MCF 10A (cell line): ENCODE measurements at regions of chr3 and their contacts with region 1.

Region 1: DNA sequence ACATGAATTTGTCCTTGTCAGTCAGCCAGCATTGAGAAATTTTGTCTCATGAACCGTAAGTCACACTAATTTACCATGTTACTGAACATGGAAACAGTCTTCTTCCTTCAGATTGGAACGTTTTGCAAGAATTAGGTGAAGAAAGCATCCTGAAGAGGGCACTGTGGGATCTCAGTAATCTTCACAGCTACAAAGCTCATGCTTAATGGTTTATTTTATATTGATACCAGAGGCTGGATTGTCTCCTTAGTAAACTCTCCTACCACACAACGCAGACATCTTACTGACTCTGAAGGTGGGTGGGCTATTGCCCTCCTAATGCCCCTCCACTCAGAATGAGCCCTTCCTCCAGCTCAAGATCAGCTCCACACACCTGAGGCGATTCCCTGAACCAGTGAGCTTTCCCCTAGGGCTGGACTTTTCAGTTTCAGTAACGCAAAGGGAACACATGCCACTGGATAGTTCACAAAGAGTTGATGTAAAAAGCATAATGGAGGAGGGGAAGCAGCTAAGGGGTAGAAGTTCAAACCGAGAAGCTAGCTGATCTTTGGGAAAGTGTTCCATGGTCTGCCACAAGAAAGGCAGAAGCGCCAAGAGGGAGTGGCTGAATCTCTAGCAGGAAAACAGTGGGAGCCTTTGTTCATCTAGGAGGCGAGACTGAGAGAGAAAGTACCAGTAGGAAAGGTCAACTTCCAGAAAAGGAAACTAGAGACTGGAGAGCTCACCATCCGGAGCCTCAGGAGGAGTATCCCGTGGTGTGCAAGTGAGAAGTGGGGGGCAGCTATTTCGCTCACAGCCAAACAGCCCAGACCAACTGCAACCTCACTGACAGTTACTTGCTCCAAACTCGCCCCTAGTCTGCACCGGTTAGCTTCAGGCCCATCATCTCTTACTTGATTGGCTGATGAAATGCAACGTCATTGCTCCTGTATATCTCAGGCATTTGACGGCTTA is at the start of gene SLC9C1:
- DNase-seq: peak; percentile 84
- H3K4me3 Mint-ChIP-seq: peak within 1 kb of the TSS; percentile 60
- H3K27ac Mint-ChIP-seq: peak within 1 kb of the TSS; percentile 88
- H3K4me1 Mint-ChIP-seq: peaks cover 16% of the 10 kb centered on the region
- H3K27me3 Mint-ChIP-seq: no peaks in the 10 kb centered on the region
- CTCF ChIP-seq: peak; percentile 56
- total RNA-seq, gene SLC9C1: not detected in 2 replicates

Region 2: GRCh38 chr3:112117841-112118571 is 175.6 kb before region 1 on chr3:
- CTCF ChIA-PET with region 1: interaction called, 10 read pairs
- POLR2A ChIA-PET with region 1: no interaction called
- intact Hi-C with region 1: no loop called
- DNase-seq: no peak
- H3K4me3 Mint-ChIP-seq: no peak overlapping the region
- H3K27ac Mint-ChIP-seq: peak overlapping the region; percentile 35
- H3K4me1 Mint-ChIP-seq: no peaks in the 10 kb centered on the region
- H3K27me3 Mint-ChIP-seq: no peaks in the 10 kb centered on the region
- CTCF ChIP-seq: no peak

Region 3: GRCh38 chr3:112273536-112273935 is 20.1 kb before region 1 on chr3:
- CTCF ChIA-PET with region 1: interaction called, 16 read pairs
- POLR2A ChIA-PET with region 1: no interaction called
- intact Hi-C with region 1: no loop called
- DNase-seq: no peak
- H3K4me3 Mint-ChIP-seq: no peak overlapping the region
- H3K27ac Mint-ChIP-seq: no peak overlapping the region
- H3K4me1 Mint-ChIP-seq: no peaks in the 10 kb centered on the region
- H3K27me3 Mint-ChIP-seq: no peaks in the 10 kb centered on the region
- CTCF ChIP-seq: no peak

Region 4: DNA sequence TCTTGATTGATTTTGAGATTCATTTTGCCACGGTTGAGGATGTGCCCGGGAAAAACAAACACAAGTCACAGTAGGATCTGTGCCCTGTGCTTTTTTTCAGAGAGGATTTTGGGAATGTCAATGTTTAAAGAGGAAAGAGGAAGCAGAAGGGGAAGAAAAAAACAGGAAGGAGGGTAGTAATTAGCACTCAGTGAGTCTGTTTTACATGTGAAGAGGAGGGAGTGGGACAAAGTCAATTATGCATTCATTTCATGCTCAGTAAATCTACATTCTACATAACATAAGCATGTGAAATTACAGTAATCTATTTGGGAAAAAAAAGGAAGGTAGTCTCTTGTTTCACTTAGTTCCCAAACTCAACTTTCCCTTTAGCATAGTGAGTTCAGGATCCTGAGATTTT is 21.0 kb after region 1 on chr3:
- CTCF ChIA-PET with region 1: interaction called, 97 read pairs
- POLR2A ChIA-PET with region 1: interaction called, 23 read pairs
- intact Hi-C with region 1: no loop called
- DNase-seq: no peak
- H3K4me3 Mint-ChIP-seq: no peak overlapping the region
- H3K27ac Mint-ChIP-seq: peak overlapping the region; percentile 7
- H3K4me1 Mint-ChIP-seq: peaks cover 15% of the 10 kb centered on the region
- H3K27me3 Mint-ChIP-seq: no peaks in the 10 kb centered on the region
- CTCF ChIP-seq: no peak

Region 5: GRCh38 chr3:112333002-112333380 is 39.3 kb after region 1 on chr3 and contains the start of gene CD200:
- CTCF ChIA-PET with region 1: interaction called, 20 read pairs
- POLR2A ChIA-PET with region 1: interaction called, 3 read pairs
- intact Hi-C with region 1: no loop called
- DNase-seq: peak; percentile 13
- H3K4me3 Mint-ChIP-seq: peak within 1 kb of the TSS; percentile 73
- H3K27ac Mint-ChIP-seq: no peak within 1 kb of the TSS
- H3K4me1 Mint-ChIP-seq: no peaks in the 10 kb centered on the region
- H3K27me3 Mint-ChIP-seq: no peaks in the 10 kb centered on the region
- CTCF ChIP-seq: no peak
- total RNA-seq, gene CD200: 0.44 TPM in 1 of 2 replicates, not detected in the other

Region 6: DNA sequence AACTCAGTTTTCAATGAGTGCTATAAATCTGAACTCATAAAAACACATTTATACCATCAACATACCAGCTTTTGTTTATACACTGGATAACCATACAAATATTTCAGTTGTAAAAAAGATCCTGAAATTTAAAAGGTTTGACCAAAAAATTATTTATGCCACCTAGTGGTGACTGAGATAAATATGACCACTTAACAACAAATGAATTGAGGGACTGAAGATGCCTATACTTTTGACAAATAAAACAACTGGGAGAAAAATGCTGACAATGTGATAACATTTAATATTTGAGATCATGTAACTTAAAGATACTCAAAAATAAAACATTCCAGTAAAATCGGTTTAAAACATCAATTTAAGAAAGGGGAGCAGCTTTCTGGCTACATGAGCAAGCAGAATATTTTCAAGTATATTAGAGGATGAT is 237.7 kb after region 1 on chr3:
- CTCF ChIA-PET with region 1: interaction called, 24 read pairs
- POLR2A ChIA-PET with region 1: interaction called, 7 read pairs
- intact Hi-C with region 1: loop called (anchors 1 kb)
- DNase-seq: peak; percentile 34
- H3K4me3 Mint-ChIP-seq: no peak overlapping the region
- H3K27ac Mint-ChIP-seq: no peak overlapping the region
- H3K4me1 Mint-ChIP-seq: no peaks in the 10 kb centered on the region
- H3K27me3 Mint-ChIP-seq: no peaks in the 10 kb centered on the region
- CTCF ChIP-seq: peak; percentile 42